ENCODE measurements at regions of chr4 and their contacts with region 1.

Region 1: DNA sequence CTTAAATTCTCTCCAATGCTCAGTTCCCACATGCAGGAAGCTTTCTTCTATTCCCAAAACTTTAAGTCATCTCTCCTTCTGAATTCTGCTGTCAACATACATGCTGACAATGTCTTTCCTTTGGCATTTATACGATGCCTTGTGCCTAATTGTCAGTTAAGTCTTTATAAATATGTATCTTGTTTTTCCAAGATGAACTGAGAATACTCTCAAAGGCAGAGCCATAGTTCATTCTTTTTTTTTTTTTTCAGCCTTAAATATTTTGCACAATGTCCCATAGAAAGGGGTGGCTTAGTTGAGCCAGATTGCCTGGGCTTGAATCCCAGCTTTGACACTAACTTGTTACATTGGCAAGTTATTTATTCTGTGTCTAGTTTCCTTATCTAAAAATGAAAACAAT is 210.6 kb downstream of the QDPR start:
- DNase-seq: no peak
- H3K4me3 ChIP-seq: no peak overlapping the region
- CTCF ChIP-seq: no peak

Region 2: GRCh38 chr4:17265139-17265538 is 36.1 kb before region 1 on chr4:
- in situ Hi-C with region 1: loop called (anchors 5 kb)
- DNase-seq: no peak
- H3K4me3 ChIP-seq: no peak overlapping the region
- CTCF ChIP-seq: no peak

Measured in astrocyte of the cerebellum (primary cell).